ENCODE measurements at regions of chr9 and their contacts with region 1.

Region 1: GRCh38 chr9:77456829-77457437 is 191.2 kb downstream of the GNA14 start:
- DNase-seq: peak; percentile 43 to 93 (median 82)
- H3K4me3 ChIP-seq: no peak overlapping the region
- H3K27ac ChIP-seq: peak overlapping the region in 2 of 59 donors; percentile 14 to 60
- H3K27me3 ChIP-seq: no peaks in the 10 kb centered on the region
- CTCF ChIP-seq: peak; percentile 64 to 97 (median 90)

Region 2: DNA sequence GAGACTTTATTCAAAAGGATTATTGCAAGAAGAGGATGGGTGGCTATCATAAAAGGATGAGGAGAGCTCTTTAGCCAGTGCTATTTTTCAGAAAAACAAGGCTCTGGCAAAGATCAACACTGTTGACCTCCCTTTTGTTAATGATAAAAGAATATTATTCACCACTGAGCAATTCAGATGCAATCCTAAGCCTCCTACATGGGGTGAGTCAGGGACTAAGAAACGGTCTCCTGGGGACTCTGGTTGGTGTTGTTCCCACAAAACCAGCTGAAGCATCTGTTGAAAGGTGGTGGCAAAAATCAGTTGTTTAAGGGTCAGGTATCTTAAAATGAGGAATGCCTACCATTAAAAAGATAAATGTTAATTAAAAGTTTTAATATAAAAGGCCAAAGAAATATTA is 1005.7 kb before region 1 on chr9:
- intact Hi-C with region 1: no loop called
- DNase-seq: no peak
- H3K4me3 ChIP-seq: no peak overlapping the region
- H3K27ac ChIP-seq: no peak overlapping the region
- H3K27me3 ChIP-seq: no peaks in the 10 kb centered on the region
- CTCF ChIP-seq: no peak

Region 3: GRCh38 chr9:77417566-77417965 is 39.4 kb before region 1 on chr9:
- intact Hi-C with region 1: no loop called
- DNase-seq: no peak
- H3K4me3 ChIP-seq: no peak overlapping the region
- H3K27ac ChIP-seq: peak overlapping the region in 27 of 59 donors; percentile 3 to 66 (median 31)
- H3K27me3 ChIP-seq: no peaks in the 10 kb centered on the region
- CTCF ChIP-seq: no peak

Region 4: GRCh38 chr9:77534376-77535057 is 77.6 kb after region 1 on chr9:
- intact Hi-C with region 1: loop called in 1 of 2 experiments (anchors 5 kb)
- DNase-seq: peak in 5 of 10 donors; percentile 15 to 69 (median 52)
- H3K4me3 ChIP-seq: peak overlapping the region in 15 of 59 donors; percentile 0 to 33 (median 9)
- H3K27ac ChIP-seq: peak overlapping the region; percentile 48 to 98 (median 93)
- H3K27me3 ChIP-seq: no peaks in the 10 kb centered on the region
- CTCF ChIP-seq: peak in 16 of 56 donors; percentile 7 to 44 (median 20)

Region 5: DNA sequence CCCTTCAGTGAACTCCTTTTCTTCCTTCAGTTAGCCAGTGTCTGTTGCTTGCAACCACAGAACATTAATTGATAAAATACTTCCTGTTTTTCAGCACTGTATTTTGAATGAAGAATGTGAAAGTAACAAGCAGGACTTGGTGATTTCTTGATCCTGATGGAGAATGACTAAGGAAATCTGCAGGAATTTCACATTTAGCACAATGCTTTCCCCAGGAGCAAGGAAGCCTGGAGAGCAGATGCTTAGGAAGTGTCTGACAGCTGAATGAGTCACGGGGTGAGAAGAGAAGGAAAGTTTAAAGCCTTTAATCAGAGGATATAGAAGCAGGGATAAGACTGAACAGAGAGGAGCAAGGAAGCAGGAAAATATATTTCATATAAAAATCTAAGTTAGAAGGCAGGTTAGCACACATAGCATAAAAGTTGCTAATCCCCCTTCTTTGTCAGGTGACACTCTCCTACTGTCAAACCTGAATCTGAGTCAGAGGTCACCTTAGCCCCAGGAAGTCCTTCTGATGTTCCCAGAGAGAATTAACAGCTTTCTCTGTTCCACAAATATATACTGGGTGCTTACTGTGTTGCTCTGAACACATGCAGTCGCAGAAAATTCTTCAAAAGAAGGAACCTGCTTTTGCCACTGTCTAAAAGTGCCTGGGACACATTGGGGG is 131.5 kb after region 1 on chr9:
- intact Hi-C with region 1: no loop called
- DNase-seq: peak in 1 of 10 donors; percentile 23
- H3K4me3 ChIP-seq: no peak overlapping the region
- H3K27ac ChIP-seq: peak overlapping the region in 25 of 59 donors; percentile 1 to 65 (median 43)
- H3K27me3 ChIP-seq: no peaks in the 10 kb centered on the region
- CTCF ChIP-seq: no peak

Region 6: DNA sequence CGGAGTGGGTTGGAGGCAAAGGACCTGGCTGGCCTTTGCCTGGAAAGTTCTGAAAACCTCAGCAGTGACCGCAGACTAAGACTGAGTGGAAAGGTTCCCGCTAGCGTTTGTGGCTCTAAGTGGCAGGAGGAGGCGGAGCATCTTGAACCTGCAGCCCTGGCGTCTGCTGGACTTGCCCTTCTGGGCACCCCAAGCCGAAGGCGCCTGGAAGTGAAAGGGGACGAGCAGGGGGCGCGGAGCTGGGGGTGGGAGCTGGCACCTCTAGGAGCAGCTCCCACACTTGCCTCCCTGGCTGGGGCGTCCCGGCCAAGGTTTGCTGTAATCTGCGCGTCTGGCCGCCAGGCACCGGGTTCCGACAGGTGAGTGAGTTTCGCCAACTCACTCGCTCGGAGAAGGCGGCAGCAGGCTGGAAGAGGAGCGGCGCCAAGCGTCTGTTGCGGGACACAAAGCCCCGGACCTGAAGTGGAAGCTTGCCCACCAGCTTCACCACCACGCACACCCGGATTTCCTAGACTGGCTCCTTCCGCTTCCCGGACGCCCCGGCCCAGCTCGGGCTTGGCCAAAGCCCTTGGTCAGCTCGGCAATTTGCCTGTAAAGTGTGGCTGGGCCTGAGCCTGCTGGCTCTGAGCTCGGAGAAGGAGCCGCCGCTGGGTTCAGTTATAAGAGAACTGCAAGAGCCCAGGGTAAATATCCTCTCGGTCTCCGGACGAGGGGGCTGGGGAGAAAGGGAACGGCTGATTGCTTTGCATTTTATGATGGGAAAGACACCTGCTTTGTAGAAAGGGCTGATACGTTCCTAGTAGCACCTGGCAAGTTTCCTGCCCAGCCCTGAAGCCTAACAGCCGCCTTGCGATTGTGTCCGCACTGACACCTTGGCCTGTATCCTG is 191.5 kb after region 1 on chr9 and contains the start of gene GNA14:
- intact Hi-C with region 1: loop called in 1 of 2 experiments (anchors 5 kb)
- DNase-seq: peak in 5 of 10 donors; percentile 10 to 52 (median 43)
- H3K4me3 ChIP-seq: peak within 1 kb of the TSS; percentile 46 to 78 (median 64)
- H3K27ac ChIP-seq: peak within 1 kb of the TSS in 24 of 59 donors; percentile 4 to 61 (median 36)
- H3K27me3 ChIP-seq: peaks cover 0 to 26% (median 3%) of the 10 kb centered on the region in 45 donors
- CTCF ChIP-seq: peak in 11 of 56 donors; percentile 4 to 22 (median 13)
- total RNA-seq, gene GNA14: 5.6 to 42.0 (median 13.2) TPM

Region 7: DNA sequence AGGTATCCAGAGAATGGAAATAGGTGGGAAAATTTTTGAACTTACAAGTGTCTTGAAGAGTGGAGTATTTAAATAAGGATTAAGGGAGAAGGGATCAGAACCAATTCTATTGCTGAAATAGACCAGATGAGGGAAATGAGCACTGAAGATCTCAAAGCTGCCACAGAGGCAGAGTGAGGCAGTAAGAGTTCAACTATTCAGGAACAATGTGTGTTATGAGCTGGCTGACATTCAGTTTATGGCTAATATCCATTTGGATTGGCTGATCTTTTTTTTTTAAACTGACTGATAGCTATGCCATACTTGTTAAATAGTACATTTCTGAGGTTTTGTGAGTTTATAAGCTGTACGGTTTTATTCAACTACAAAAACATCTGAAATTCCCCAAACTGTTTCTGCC is 286.5 kb after region 1 on chr9:
- intact Hi-C with region 1: loop called in 1 of 2 experiments (anchors 10 kb)
- DNase-seq: no peak
- H3K4me3 ChIP-seq: no peak overlapping the region
- H3K27ac ChIP-seq: no peak overlapping the region
- H3K27me3 ChIP-seq: no peaks in the 10 kb centered on the region
- CTCF ChIP-seq: no peak

Region 8: GRCh38 chr9:77751341-77752091 is 294.6 kb after region 1 on chr9:
- intact Hi-C with region 1: loop called (anchors 2 to 10 kb)
- DNase-seq: peak in 1 of 10 donors; percentile 9
- H3K4me3 ChIP-seq: peak overlapping the region in 20 of 59 donors; percentile 3 to 38 (median 21)
- H3K27ac ChIP-seq: peak overlapping the region in 54 of 59 donors; percentile 1 to 84 (median 62)
- H3K27me3 ChIP-seq: no peaks in the 10 kb centered on the region
- CTCF ChIP-seq: peak; percentile 48 to 85 (median 70)

Region 9: DNA sequence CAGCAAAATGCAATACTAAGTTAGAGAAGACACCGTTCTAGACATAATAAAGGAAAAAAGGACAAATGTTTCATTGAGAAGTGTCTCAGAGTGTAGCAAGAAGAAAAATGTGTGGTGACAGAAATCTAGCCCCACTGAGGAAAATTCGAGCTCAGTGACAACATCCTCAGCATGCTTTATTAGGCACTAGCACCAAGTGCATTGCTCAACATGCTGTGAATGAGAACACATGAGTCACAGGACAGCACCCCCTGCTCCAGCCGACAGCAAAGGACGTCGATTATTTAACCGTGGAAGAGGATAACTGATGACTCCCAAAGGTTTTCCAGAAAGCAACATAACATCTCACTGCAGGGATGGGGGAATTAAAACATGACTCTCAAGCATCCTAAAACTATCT is 392.0 kb after region 1 on chr9:
- intact Hi-C with region 1: loop called in 1 of 2 experiments (anchors 5 kb)
- DNase-seq: peak in 6 of 10 donors; percentile 43 to 77 (median 64)
- H3K4me3 ChIP-seq: no peak overlapping the region
- H3K27ac ChIP-seq: peak overlapping the region in 58 of 59 donors; percentile 1 to 91 (median 72)
- H3K27me3 ChIP-seq: no peaks in the 10 kb centered on the region
- CTCF ChIP-seq: peak in 2 of 56 donors; percentile 8 to 11